PC-3 (cell line): ENCODE measurements at regions of chr11 and their contacts with region 1.

Region 1: GRCh38 chr11:60265373-60266214 is 14.9 kb upstream of the MS4A4A start:
- DNase-seq: peak; percentile 85
- ATAC-seq: peak; percentile 48
- H3K4me3 ChIP-seq: no peak overlapping the region
- H3K27ac ChIP-seq: no peak overlapping the region
- H3K4me1 ChIP-seq: peaks cover 4% of the 10 kb centered on the region; the same call in 1 of the 2 replicates
- H3K27me3 ChIP-seq: peaks cover 30% of the 10 kb centered on the region
- CTCF ChIP-seq: peak; percentile 90

Region 2: DNA sequence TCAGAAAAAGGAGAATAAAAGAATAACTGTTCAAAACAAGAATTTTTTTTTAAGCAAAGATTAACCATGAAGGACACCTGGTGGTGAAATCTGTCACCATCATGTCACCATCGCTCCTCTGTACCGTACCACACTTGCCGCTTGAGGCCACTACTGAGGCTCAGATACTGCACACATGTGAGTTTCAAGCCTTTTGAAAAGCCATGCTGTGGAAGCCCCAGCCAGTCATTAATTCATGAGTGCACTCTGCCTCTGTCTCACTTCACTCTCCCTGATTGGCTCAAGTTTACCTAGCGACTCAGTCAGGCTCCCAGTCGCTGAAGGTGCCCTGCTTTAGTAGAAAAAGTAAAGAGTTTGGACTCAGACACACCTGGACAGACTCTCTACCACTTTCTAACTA is 220.4 kb after region 1 on chr11:
- CTCF ChIA-PET with region 1: no interaction called
- POLR2A ChIA-PET with region 1: no interaction called
- intact Hi-C with region 1: loop called (anchors 5 kb)
- DNase-seq: peak; percentile 85
- ATAC-seq: peak; percentile 99
- H3K4me3 ChIP-seq: no peak overlapping the region
- H3K27ac ChIP-seq: no peak overlapping the region
- H3K4me1 ChIP-seq: no peaks in the 10 kb centered on the region
- H3K27me3 ChIP-seq: peaks cover 35% of the 10 kb centered on the region; the same call in 1 of the 2 replicates
- CTCF ChIP-seq: peak; percentile 97

Region 3: GRCh38 chr11:60615497-60615896 is 349.9 kb after region 1 on chr11:
- CTCF ChIA-PET with region 1: no interaction called
- POLR2A ChIA-PET with region 1: no interaction called
- intact Hi-C with region 1: loop called (anchors 5 kb)
- DNase-seq: no peak
- ATAC-seq: no peak
- H3K4me3 ChIP-seq: no peak overlapping the region
- H3K27ac ChIP-seq: no peak overlapping the region
- H3K4me1 ChIP-seq: no peaks in the 10 kb centered on the region
- H3K27me3 ChIP-seq: peaks cover 45% of the 10 kb centered on the region
- CTCF ChIP-seq: no peak

Region 4: GRCh38 chr11:60762851-60763691 is 497.5 kb after region 1 on chr11:
- CTCF ChIA-PET with region 1: no interaction called
- POLR2A ChIA-PET with region 1: no interaction called
- intact Hi-C with region 1: loop called (anchors 5 kb)
- DNase-seq: peak; percentile 51
- ATAC-seq: no peak
- H3K4me3 ChIP-seq: no peak overlapping the region
- H3K27ac ChIP-seq: no peak overlapping the region
- H3K4me1 ChIP-seq: peaks cover 10% of the 10 kb centered on the region
- H3K27me3 ChIP-seq: peaks cover 44% of the 10 kb centered on the region
- CTCF ChIP-seq: peak; percentile 61